GM23248 (cell line): ENCODE measurements at regions of chr1 and their contacts with region 1.

Region 1: GRCh38 chr1:196309386-196309785 is 298.9 kb downstream of the KCNT2 start:
- DNase-seq: peak; percentile 63
- H3K4me3 ChIP-seq: no peak overlapping the region
- H3K27ac ChIP-seq: no peak overlapping the region
- H3K4me1 ChIP-seq: no peaks in the 10 kb centered on the region
- H3K27me3 ChIP-seq: no peaks in the 10 kb centered on the region

Region 2: GRCh38 chr1:196148367-196148970 is 160.9 kb before region 1 on chr1:
- in situ Hi-C with region 1: loop called (anchors 10 kb)
- DNase-seq: peak; percentile 42
- H3K4me3 ChIP-seq: no peak overlapping the region
- H3K27ac ChIP-seq: no peak overlapping the region
- H3K4me1 ChIP-seq: no peaks in the 10 kb centered on the region
- H3K27me3 ChIP-seq: no peaks in the 10 kb centered on the region

Region 3: DNA sequence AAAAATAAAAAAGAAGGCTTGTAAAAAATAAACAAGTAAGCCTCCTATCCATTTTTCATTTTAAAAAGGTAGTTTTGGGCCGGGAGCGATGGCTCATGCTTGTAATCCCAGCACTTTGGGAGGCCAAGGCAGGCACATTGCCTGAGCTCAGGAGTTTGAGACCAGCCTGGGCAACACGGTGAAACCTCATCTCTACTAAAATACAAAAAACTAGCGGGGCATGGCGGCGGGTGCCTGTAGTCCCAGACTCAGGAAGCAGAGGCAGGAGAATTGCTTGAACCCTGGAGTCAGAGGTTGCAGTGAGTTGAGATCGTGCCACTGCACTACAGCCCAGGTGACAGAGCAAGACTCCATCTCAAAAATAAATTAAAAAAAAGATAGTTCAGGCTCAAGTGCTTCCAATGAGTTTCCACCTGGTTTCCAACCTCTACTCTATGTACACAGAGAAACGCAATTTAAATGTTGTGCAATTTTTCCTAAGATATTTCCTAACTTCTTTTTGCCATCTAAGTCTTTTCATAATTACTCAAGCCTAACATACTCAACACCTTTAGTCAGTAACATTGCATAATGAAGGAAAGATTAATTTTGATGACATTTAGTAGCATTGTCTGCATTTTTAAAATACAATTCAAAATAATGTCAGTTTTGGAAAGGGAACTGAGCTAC is 192.5 kb after region 1 on chr1:
- in situ Hi-C with region 1: no loop called
- DNase-seq: no peak
- H3K4me3 ChIP-seq: no peak overlapping the region
- H3K27ac ChIP-seq: no peak overlapping the region
- H3K4me1 ChIP-seq: no peaks in the 10 kb centered on the region
- H3K27me3 ChIP-seq: no peaks in the 10 kb centered on the region